Caco-2 (cell line): ENCODE measurements at regions of chr2 and their contacts with region 1.

Region 1: GRCh38 chr2:113157118-113157896 is 16.5 kb upstream of the PSD4 start:
- DNase-seq: peak; percentile 87 to 88
- H3K4me3 ChIP-seq: peak overlapping the region; percentile 80
- H3K4me3 Mint-ChIP-seq: peak overlapping the region; percentile 75
- H3K27ac Mint-ChIP-seq: peak overlapping the region; percentile 33
- H3K4me1 ChIP-seq: peaks cover 22% of the 10 kb centered on the region
- H3K4me1 Mint-ChIP-seq: peaks cover 5% of the 10 kb centered on the region
- H3K27me3 ChIP-seq: no peaks in the 10 kb centered on the region
- H3K27me3 Mint-ChIP-seq: no peaks in the 10 kb centered on the region
- CTCF ChIP-seq: no peak

Region 2: GRCh38 chr2:113181258-113182051 is 24.1 kb after region 1 on chr2:
- CTCF ChIA-PET with region 1: interaction called, 3 read pairs
- POLR2A ChIA-PET with region 1: interaction called, 3 read pairs
- intact Hi-C with region 1: loop called (anchors 2 kb)
- DNase-seq: no peak
- H3K4me3 ChIP-seq: no peak overlapping the region
- H3K4me3 Mint-ChIP-seq: no peak overlapping the region
- H3K27ac Mint-ChIP-seq: no peak overlapping the region
- H3K4me1 ChIP-seq: peaks cover 31% of the 10 kb centered on the region
- H3K4me1 Mint-ChIP-seq: peaks cover 10% of the 10 kb centered on the region
- H3K27me3 ChIP-seq: no peaks in the 10 kb centered on the region; the same call in 1 of the 2 replicates
- H3K27me3 Mint-ChIP-seq: no peaks in the 10 kb centered on the region
- CTCF ChIP-seq: no peak

Region 3: GRCh38 chr2:113370478-113371091 is 213.3 kb after region 1 on chr2:
- CTCF ChIA-PET with region 1: no interaction called
- POLR2A ChIA-PET with region 1: no interaction called
- intact Hi-C with region 1: no loop called
- DNase-seq: peak; percentile 84 to 85
- H3K4me3 ChIP-seq: no peak overlapping the region
- H3K4me3 Mint-ChIP-seq: no peak overlapping the region
- H3K27ac Mint-ChIP-seq: no peak overlapping the region
- H3K4me1 ChIP-seq: peaks cover 19% of the 10 kb centered on the region
- H3K4me1 Mint-ChIP-seq: peaks cover 22% of the 10 kb centered on the region
- H3K27me3 ChIP-seq: no peaks in the 10 kb centered on the region
- H3K27me3 Mint-ChIP-seq: no peaks in the 10 kb centered on the region
- CTCF ChIP-seq: peak; percentile 63 to 84